Panc1 (cell line): ENCODE measurements at regions of chr5 and their contacts with region 1.

Region 1: GRCh38 chr5:172283020-172283861 is at the start of gene UBTD2:
- DNase-seq: no peak
- ATAC-seq: peak; percentile 94
- H3K4me3 ChIP-seq: peak within 1 kb of the TSS; percentile 70 to 85
- H3K27ac ChIP-seq: peak within 1 kb of the TSS; percentile 92
- H3K4me1 ChIP-seq: peaks cover 29% of the 10 kb centered on the region
- H3K27me3 ChIP-seq: no peaks in the 10 kb centered on the region
- CTCF ChIP-seq: peak; percentile 88
- total RNA-seq, gene UBTD2: 32.5 TPM

Region 2: GRCh38 chr5:172106511-172107356 is 176.5 kb before region 1 on chr5:
- CTCF ChIA-PET with region 1: no interaction called
- POLR2A ChIA-PET with region 1: no interaction called
- in situ Hi-C with region 1: no loop called
- intact Hi-C with region 1: loop called (anchors 2 kb)
- DNase-seq: peak; percentile 33
- ATAC-seq: peak; percentile 55; the same call in 1 of the 2 replicates
- H3K4me3 ChIP-seq: peak overlapping the region in 1 of 2 experiments; percentile 24; a peak in 1 of 4 replicates
- H3K27ac ChIP-seq: peak overlapping the region; percentile 20; the same call in 1 of the 2 replicates
- H3K4me1 ChIP-seq: peaks cover 16% of the 10 kb centered on the region
- H3K27me3 ChIP-seq: no peaks in the 10 kb centered on the region
- CTCF ChIP-seq: peak; percentile 99

Region 3: GRCh38 chr5:172194985-172195774 is 88.1 kb before region 1 on chr5:
- CTCF ChIA-PET with region 1: interaction called, 10 read pairs
- POLR2A ChIA-PET with region 1: no interaction called
- in situ Hi-C with region 1: no loop called
- intact Hi-C with region 1: loop called (anchors 10 kb)
- DNase-seq: no peak
- ATAC-seq: peak; percentile 68
- H3K4me3 ChIP-seq: no peak overlapping the region
- H3K27ac ChIP-seq: no peak overlapping the region
- H3K4me1 ChIP-seq: peaks cover 6% of the 10 kb centered on the region; the same call in 1 of the 2 replicates
- H3K27me3 ChIP-seq: no peaks in the 10 kb centered on the region
- CTCF ChIP-seq: no peak